Activated CD4-positive, alpha-beta memory T cell treated with anti-CD3 and anti-CD28 coated beads for 36 hours (primary cell): ENCODE measurements at regions of chr12 and their contacts with region 1.

Region 1: DNA sequence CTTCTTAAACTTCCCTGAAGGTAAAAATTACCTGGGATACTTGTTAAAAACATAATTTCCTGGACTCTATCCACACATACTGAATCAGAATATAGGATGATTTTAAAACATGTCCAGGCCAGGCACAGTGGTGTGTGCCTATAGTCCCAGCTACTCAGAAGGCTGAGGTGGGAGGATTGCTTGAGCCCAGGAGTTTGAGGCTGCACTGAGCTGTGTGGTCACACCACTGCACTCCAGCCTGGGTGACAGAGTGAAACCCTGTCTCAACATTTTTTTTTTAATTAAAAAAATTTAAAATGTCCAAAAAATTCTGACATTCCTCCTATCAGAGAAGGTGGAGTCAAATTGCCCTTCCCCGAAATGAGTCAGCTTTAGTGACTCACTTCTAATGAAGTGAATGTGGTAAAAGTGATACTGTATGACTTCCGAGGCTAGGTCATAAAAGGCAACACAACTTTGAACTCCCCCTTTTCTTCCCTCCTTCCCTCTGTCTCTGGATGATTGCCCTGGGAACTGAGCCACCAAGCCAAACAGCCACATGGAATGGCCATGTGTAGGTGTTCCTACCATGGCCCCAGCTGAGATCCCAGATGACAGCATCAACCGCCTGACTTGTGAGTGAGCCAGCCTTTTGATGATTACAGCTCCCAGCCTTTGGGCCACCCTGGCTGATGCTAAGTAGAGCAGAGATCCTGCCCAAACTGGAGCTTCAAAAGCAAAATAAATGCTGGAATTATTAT is 36.3 kb downstream of the LIMA1 start:
- DNase-seq: peak; percentile 73
- H3K4me3 Mint-ChIP-seq: peak overlapping the region; percentile 78
- H3K27ac Mint-ChIP-seq: peak overlapping the region; percentile 91
- H3K4me1 Mint-ChIP-seq: peaks cover 69% of the 10 kb centered on the region
- H3K27me3 Mint-ChIP-seq: no peaks in the 10 kb centered on the region

Region 2: GRCh38 chr12:50283229-50283923 is 36.3 kb after region 1 on chr12 and contains the start of gene LIMA1:
- CTCF ChIA-PET with region 1: no interaction called
- POLR2A ChIA-PET with region 1: interaction called, 9 read pairs
- intact Hi-C with region 1: loop called (anchors 2 kb)
- DNase-seq: peak; percentile 94
- H3K4me3 Mint-ChIP-seq: peak within 1 kb of the TSS; percentile 89
- H3K27ac Mint-ChIP-seq: peak within 1 kb of the TSS; percentile 62
- H3K4me1 Mint-ChIP-seq: peaks cover 25% of the 10 kb centered on the region
- H3K27me3 Mint-ChIP-seq: no peaks in the 10 kb centered on the region
- total RNA-seq, gene LIMA1: 115 to 117 TPM